Dendritic cell treated with granulocyte-macrophage colony-stimulating factor and Interleukin-4, amounts not matched to agents 40 ng/mL and 50 ng/mL, for 4 days (primary cell): ENCODE measurements at regions of chr10 and their contacts with region 1.

Region 1: GRCh38 chr10:73879296-73880173 is 5.2 kb upstream of the CAMK2G start:
- H3K4me3 Mint-ChIP-seq: no peak overlapping the region
- H3K27ac Mint-ChIP-seq: peak overlapping the region; percentile 72
- H3K4me1 Mint-ChIP-seq: peaks cover 23% of the 10 kb centered on the region
- H3K27me3 Mint-ChIP-seq: peaks cover 1% of the 10 kb centered on the region

Region 2: GRCh38 chr10:73848821-73849489 is 30.6 kb before region 1 on chr10:
- intact Hi-C with region 1: loop called (anchors 1 kb)
- H3K4me3 Mint-ChIP-seq: no peak overlapping the region
- H3K27ac Mint-ChIP-seq: peak overlapping the region; percentile 49
- H3K4me1 Mint-ChIP-seq: peaks cover 19% of the 10 kb centered on the region
- H3K27me3 Mint-ChIP-seq: no peaks in the 10 kb centered on the region